ENCODE measurements at regions of chr1 and their contacts with region 1.

Region 1: DNA sequence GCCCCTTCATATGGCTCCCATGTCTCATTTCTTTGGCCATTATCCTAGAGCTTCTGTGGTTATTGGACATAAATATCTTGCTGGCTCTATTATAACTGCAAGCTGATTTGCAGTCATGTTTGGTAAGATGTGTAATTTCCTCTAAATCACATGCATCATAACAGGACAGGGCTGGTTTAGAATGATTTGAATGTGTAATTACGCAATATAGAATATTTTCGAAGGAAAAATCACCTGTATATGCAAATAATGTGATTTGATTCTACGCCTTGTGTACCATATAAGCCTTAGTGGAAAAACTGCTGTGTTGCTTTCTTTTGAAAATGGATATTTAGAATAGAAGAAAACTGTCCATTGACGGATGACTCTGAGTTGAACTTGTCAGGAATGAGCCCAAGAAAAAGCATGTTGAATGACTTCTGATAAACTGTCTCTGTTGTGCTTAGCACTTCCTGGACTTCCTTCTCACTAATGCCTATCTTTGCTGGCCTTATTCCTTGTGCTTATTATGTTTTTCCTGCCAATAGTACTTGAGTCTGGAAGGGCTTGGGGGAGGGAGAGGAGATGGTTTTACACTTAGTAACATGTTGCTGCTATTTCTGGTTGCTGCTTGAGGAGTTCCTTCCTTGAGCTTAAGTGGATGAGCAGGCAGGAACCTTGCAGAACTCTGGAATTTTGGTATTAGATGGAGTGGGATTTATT is 6.5 kb downstream of the CACHD1 start:
- DNase-seq: peak in 2 of 5 donors; percentile 26 to 34
- ATAC-seq: peak; percentile 77 to 93 (median 84)
- H3K4me3 ChIP-seq: no peak overlapping the region
- H3K27ac ChIP-seq: peak overlapping the region in 9 of 12 donors; percentile 9 to 61 (median 27)
- H3K4me1 ChIP-seq: peaks cover 7 to 80% (median 46%) of the 10 kb centered on the region in 12 donors
- H3K27me3 ChIP-seq: peaks cover 0 to 4% (median 0%) of the 10 kb centered on the region in 9 donors
- CTCF ChIP-seq: no peak
- POLR2A ChIP-seq: no peak

Region 2: GRCh38 chr1:64515427-64515826 is 39.0 kb after region 1 on chr1:
- intact Hi-C with region 1: loop called in 4 of 10 experiments (anchors 5 kb)
- DNase-seq: peak in 4 of 5 donors; percentile 29 to 64 (median 45)
- ATAC-seq: peak; percentile 72 to 82 (median 78)
- H3K4me3 ChIP-seq: no peak overlapping the region
- H3K27ac ChIP-seq: peak overlapping the region in 3 of 12 donors; percentile 5 to 60 (median 7)
- H3K4me1 ChIP-seq: peaks cover 3 to 80% (median 57%) of the 10 kb centered on the region in 12 donors
- H3K27me3 ChIP-seq: no peaks in the 10 kb centered on the region
- CTCF ChIP-seq: no peak
- POLR2A ChIP-seq: no peak

Region 3: GRCh38 chr1:64539781-64540218 is 63.4 kb after region 1 on chr1:
- intact Hi-C with region 1: loop called in 5 of 10 experiments (anchors 2 to 10 kb)
- DNase-seq: peak; percentile 68 to 89 (median 76)
- ATAC-seq: peak in 3 of 4 donors; percentile 38 to 59 (median 59)
- H3K4me3 ChIP-seq: peak overlapping the region in 9 of 12 donors; percentile 21 to 50 (median 39)
- H3K27ac ChIP-seq: peak overlapping the region in 11 of 12 donors; percentile 47 to 73 (median 61)
- H3K4me1 ChIP-seq: peaks cover 0 to 60% (median 30%) of the 10 kb centered on the region in 12 donors
- H3K27me3 ChIP-seq: no peaks in the 10 kb centered on the region
- CTCF ChIP-seq: no peak
- POLR2A ChIP-seq: no peak

Region 4: GRCh38 chr1:64898107-64898845 is 421.9 kb after region 1 on chr1:
- intact Hi-C with region 1: no loop called
- DNase-seq: peak; percentile 81 to 93 (median 87)
- ATAC-seq: peak; percentile 95 to 98 (median 98)
- H3K4me3 ChIP-seq: no peak overlapping the region
- H3K27ac ChIP-seq: peak overlapping the region; percentile 67 to 87 (median 81)
- H3K4me1 ChIP-seq: peaks cover 5 to 87% (median 37%) of the 10 kb centered on the region in 12 donors
- H3K27me3 ChIP-seq: no peaks in the 10 kb centered on the region
- CTCF ChIP-seq: no peak
- POLR2A ChIP-seq: no peak

Measured in heart left ventricle (tissue), 16 donors.